PC-3 (cell line): ENCODE measurements at regions of chr11 and their contacts with region 1.

Region 1: DNA sequence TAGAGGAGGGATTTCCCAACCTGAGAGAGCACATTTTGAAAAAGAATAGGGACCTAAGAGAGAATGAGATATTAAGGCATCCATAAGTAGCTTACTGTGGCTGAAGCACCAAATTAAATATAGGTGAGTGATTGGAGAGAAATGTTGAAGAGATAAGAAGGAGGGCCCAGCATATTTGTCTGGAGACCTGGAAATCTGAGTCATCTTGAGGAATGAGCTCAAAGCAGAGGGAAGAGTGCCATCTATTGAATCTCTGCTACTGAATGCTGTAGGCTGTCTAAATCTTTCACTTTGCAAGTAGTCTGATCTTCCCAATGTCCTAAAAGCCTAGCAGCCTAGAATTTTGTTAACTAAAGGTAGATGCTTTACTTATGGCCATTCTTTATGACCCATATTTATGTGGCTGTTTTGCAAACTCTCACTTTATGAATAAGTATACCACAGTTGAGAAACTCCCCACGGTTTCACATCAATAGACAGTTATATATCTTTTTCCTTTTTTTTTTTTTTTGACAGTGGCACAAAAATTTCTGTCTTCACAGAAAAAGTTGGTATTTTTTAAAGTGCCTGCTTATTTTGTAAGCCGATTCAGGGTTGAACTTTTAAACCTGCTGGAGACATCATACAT is 2093.5 kb downstream of the LRRC4C start:
- DNase-seq: peak; percentile 75
- ATAC-seq: peak; percentile 93
- H3K4me3 ChIP-seq: no peak overlapping the region
- H3K27ac ChIP-seq: no peak overlapping the region
- H3K4me1 ChIP-seq: no peaks in the 10 kb centered on the region
- H3K27me3 ChIP-seq: no peaks in the 10 kb centered on the region
- CTCF ChIP-seq: peak; percentile 73

Region 2: DNA sequence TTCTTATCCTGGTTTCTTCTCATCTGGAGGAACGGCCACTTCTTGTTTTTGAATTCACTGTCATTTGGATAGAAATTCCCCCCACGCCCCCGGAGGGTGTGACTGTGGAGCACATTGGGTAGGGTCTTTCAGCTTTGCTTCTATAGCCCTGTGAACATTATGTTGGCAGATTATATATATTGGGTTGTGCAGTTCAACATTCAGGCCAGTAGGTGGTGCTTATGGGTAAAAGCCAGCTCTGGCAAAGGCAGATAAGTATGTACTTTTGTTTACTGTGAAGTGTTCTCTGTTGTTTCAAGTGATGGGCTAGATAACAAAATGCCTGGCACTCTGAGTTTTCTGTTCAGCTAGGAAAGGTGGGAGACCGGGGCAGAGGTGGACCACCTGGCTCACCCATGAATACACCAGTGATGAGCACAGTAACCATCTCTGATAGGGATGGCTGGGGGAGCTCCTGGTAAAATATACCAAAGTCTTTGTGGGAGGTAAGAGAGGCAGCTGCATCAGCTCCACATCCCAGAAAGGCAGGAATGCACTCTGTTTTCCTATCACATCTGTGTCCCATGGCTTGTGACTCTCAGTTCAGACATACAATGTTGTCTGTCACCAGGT is 1419.7 kb before region 1 on chr11:
- CTCF ChIA-PET with region 1: no interaction called
- POLR2A ChIA-PET with region 1: no interaction called
- intact Hi-C with region 1: loop called (anchors 10 kb)
- DNase-seq: peak; percentile 54
- ATAC-seq: 0 out of 2 replicates have a peak, but pooled peaks have one; percentile 31
- H3K4me3 ChIP-seq: no peak overlapping the region
- H3K27ac ChIP-seq: no peak overlapping the region
- H3K4me1 ChIP-seq: peaks cover 11% of the 10 kb centered on the region
- H3K27me3 ChIP-seq: no peaks in the 10 kb centered on the region
- CTCF ChIP-seq: peak; percentile 69

Region 3: GRCh38 chr11:38971150-38971549 is 394.8 kb before region 1 on chr11:
- CTCF ChIA-PET with region 1: no interaction called
- POLR2A ChIA-PET with region 1: no interaction called
- intact Hi-C with region 1: loop called (anchors 5 kb)
- DNase-seq: peak; percentile 85
- ATAC-seq: peak; percentile 99
- H3K4me3 ChIP-seq: no peak overlapping the region
- H3K27ac ChIP-seq: peak overlapping the region; percentile 67; the same call in 1 of the 2 replicates
- H3K4me1 ChIP-seq: peaks cover 13% of the 10 kb centered on the region
- H3K27me3 ChIP-seq: no peaks in the 10 kb centered on the region
- CTCF ChIP-seq: no peak

Region 4: DNA sequence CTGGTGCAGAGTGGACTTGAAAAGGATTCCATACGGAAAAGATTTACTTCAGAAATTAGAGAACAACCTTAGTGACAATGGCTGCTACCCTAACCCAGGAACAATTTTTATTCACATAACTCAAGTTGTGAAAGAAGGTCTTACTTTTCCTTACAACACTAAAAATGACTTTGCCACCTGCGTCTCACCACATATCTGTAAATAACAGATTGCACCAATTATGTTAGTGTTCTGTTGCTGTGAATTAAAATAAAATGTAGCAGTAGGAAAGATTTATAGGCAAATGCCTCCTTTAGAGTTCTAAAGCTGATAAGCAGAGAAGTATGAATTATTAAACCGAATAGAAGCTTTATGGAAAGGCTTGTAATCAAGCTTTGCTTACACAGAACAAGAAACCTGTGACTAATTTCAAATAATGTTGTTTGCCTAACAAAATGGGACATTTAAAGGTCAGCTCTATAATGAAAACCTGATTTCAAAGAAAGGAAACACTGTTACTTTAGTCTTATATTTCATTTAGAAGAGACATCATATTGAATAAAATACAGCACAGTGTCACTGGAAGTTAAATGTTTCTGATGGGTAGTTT is 144.3 kb before region 1 on chr11:
- CTCF ChIA-PET with region 1: no interaction called
- POLR2A ChIA-PET with region 1: no interaction called
- intact Hi-C with region 1: loop called (anchors 10 kb)
- DNase-seq: peak; percentile 60
- ATAC-seq: peak; percentile 87
- H3K4me3 ChIP-seq: no peak overlapping the region
- H3K27ac ChIP-seq: peak overlapping the region; percentile 59
- H3K4me1 ChIP-seq: peaks cover 14% of the 10 kb centered on the region
- H3K27me3 ChIP-seq: no peaks in the 10 kb centered on the region
- CTCF ChIP-seq: no peak

Region 5: GRCh38 chr11:39288011-39288410 is 77.9 kb before region 1 on chr11:
- CTCF ChIA-PET with region 1: no interaction called
- POLR2A ChIA-PET with region 1: no interaction called
- intact Hi-C with region 1: no loop called
- DNase-seq: no peak
- ATAC-seq: no peak
- H3K4me3 ChIP-seq: no peak overlapping the region
- H3K27ac ChIP-seq: no peak overlapping the region
- H3K4me1 ChIP-seq: no peaks in the 10 kb centered on the region
- H3K27me3 ChIP-seq: no peaks in the 10 kb centered on the region
- CTCF ChIP-seq: no peak

Region 6: DNA sequence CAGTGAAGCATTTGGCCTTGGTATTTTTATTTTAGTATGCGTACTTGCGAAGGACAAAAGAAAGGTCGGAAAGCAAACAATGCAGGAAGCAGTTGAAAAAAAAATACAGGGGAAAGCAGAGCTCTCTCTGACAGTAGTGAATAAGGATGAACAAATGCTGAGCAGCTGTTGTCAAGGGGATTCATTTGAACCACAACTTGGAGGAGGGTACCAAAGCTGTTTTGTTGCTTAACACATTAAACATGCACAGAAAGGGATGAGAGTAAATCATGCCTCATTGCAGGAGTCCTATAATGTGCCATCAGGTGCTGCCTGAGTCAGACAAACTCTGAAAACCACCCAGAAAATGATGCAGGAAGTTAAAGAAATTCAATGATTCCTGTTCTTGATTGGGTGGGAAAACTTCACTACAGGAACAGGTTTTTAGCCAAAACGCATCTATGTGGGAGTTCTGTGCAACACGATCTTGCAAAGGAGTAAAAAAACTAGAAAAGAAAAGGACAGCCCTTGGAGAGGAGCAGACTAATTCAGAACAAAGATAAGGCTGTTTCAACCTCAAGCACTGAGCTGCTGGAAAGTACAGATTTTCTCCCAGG is 20.0 kb before region 1 on chr11:
- CTCF ChIA-PET with region 1: no interaction called
- POLR2A ChIA-PET with region 1: no interaction called
- intact Hi-C with region 1: no loop called
- DNase-seq: no peak
- ATAC-seq: no peak
- H3K4me3 ChIP-seq: no peak overlapping the region
- H3K27ac ChIP-seq: no peak overlapping the region
- H3K4me1 ChIP-seq: no peaks in the 10 kb centered on the region
- H3K27me3 ChIP-seq: no peaks in the 10 kb centered on the region
- CTCF ChIP-seq: no peak